A673 (cell line): ENCODE measurements at regions of chr20 and their contacts with region 1.

Region 1: GRCh38 chr20:53491462-53491861 is 102.2 kb downstream of the ZNF217 start:
- DNase-seq: no peak
- H3K4me3 ChIP-seq: no peak overlapping the region
- H3K27ac ChIP-seq: no peak overlapping the region
- H3K4me1 ChIP-seq: peaks cover 47% of the 10 kb centered on the region
- H3K27me3 ChIP-seq: no peaks in the 10 kb centered on the region
- CTCF ChIP-seq: no peak

Region 2: GRCh38 chr20:53195876-53196610 is 295.4 kb before region 1 on chr20:
- CTCF ChIA-PET with region 1: no interaction called
- POLR2A ChIA-PET with region 1: no interaction called
- intact Hi-C with region 1: no loop called
- DNase-seq: no peak
- H3K4me3 ChIP-seq: no peak overlapping the region
- H3K27ac ChIP-seq: no peak overlapping the region
- H3K4me1 ChIP-seq: peaks cover 8% of the 10 kb centered on the region
- H3K27me3 ChIP-seq: no peaks in the 10 kb centered on the region
- CTCF ChIP-seq: no peak; the same call in 1 of the 2 replicates

Region 3: GRCh38 chr20:53408691-53409446 is 82.6 kb before region 1 on chr20:
- CTCF ChIA-PET with region 1: no interaction called
- POLR2A ChIA-PET with region 1: no interaction called
- intact Hi-C with region 1: no loop called
- DNase-seq: peak; percentile 18
- H3K4me3 ChIP-seq: no peak overlapping the region
- H3K27ac ChIP-seq: peak overlapping the region; percentile 21
- H3K4me1 ChIP-seq: peaks cover 17% of the 10 kb centered on the region
- H3K27me3 ChIP-seq: no peaks in the 10 kb centered on the region
- CTCF ChIP-seq: no peak

Region 4: DNA sequence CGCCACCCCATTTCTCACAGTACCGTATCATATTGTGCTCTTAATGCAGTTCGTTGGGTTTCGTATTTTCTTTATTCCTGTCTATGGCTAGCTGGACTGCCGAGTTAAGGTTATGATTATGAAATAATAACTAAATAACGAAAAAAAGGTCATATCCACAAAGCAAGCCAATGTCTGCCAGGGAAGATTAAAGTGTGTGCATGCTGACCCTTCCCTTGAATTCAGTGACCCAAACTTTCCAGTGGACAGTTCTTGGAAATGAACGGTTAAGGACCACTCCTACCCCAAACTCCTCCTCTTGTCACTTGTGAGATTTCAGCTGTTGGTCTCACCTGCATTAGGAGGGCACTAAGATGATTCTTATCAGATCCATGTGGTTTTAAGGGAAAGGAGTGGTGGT is 69.4 kb before region 1 on chr20:
- CTCF ChIA-PET with region 1: no interaction called
- POLR2A ChIA-PET with region 1: interaction called, 10 read pairs
- intact Hi-C with region 1: no loop called
- DNase-seq: no peak
- H3K4me3 ChIP-seq: no peak overlapping the region
- H3K27ac ChIP-seq: no peak overlapping the region
- H3K4me1 ChIP-seq: no peaks in the 10 kb centered on the region
- H3K27me3 ChIP-seq: no peaks in the 10 kb centered on the region
- CTCF ChIP-seq: no peak

Region 5: DNA sequence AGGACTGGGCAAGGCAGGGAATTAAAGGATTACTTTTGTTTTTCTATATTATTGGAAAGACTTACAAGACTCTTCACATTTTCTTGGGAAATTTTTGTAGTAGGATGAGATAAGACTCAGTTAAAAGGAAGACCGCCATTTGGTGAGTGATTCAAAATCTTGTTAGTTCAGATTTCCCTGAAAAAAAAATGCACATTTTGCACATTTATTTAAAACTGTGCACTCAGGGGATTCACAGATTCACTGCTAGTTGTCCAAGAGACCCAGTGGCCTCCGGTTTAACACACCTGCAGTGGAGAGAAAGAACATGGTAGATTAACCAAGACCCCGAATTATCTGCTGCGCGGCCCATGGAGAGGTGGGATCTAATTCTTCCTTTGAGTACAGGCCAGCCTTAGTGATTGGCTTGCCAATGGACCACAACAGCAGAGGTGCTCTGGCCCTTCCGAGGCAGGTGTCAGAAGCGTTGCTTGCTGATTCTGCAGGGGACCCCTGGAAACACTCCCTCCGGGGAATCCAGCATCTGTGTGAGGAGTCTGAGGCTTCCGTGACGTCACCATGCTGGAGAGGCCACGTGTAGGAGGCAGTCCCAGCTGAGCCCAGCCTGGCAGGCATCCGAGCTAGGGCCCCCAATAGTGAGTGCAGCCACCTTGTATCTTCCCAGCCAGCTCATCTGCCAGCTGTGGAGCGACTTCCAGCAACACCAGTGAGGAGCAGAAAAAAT is 33.3 kb after region 1 on chr20:
- CTCF ChIA-PET with region 1: no interaction called
- POLR2A ChIA-PET with region 1: no interaction called
- intact Hi-C with region 1: no loop called
- DNase-seq: peak; percentile 38
- H3K4me3 ChIP-seq: no peak overlapping the region
- H3K27ac ChIP-seq: no peak overlapping the region
- H3K4me1 ChIP-seq: peaks cover 2% of the 10 kb centered on the region
- H3K27me3 ChIP-seq: no peaks in the 10 kb centered on the region
- CTCF ChIP-seq: no peak

Region 6: GRCh38 chr20:53578492-53579222 is 87.2 kb after region 1 on chr20:
- CTCF ChIA-PET with region 1: no interaction called
- POLR2A ChIA-PET with region 1: no interaction called
- intact Hi-C with region 1: no loop called
- DNase-seq: peak; percentile 94
- H3K4me3 ChIP-seq: peak overlapping the region; percentile 16
- H3K27ac ChIP-seq: peak overlapping the region; percentile 79
- H3K4me1 ChIP-seq: peaks cover 50% of the 10 kb centered on the region
- H3K27me3 ChIP-seq: no peaks in the 10 kb centered on the region
- CTCF ChIP-seq: peak; percentile 85